ENCODE measurements at regions of chr4 and their contacts with region 1.

Region 1: DNA sequence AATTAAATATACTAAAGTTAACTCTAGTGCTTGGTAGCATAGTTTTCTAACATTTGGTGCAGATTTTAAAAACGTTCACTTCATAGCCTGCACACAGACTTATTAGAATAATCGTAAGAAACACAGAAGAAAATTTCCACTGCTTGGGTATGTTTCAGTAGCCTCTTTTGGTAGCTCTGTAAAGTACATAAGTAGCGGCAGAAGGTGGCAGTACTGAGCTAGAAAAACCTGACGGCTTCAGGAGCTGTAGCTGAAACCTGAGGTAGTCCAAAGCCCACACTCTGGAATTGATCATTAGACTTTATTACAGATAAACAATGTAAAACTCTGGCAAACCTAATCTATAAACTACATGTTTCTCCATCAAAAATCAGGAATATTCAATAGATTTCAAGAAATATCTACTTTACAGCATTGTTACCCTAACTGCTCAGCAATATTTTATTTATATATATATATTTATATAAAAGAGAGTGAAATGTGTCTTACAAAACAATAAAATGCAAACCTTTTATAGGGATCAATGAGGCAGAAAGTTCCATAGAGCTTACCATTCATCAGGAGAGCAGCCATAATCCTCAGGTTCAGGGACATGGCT is 88.2 kb downstream of the ATP8A1 start:
- DNase-seq: peak; percentile 80
- ATAC-seq: peak; percentile 90
- H3K4me3 ChIP-seq: no peak overlapping the region
- H3K4me3 Mint-ChIP-seq: no peak overlapping the region
- H3K27ac ChIP-seq: peak overlapping the region in 1 of 2 donors; percentile 17
- H3K27ac Mint-ChIP-seq: no peak overlapping the region
- H3K4me1 ChIP-seq: no peaks in the 10 kb centered on the region
- H3K4me1 Mint-ChIP-seq: no peaks in the 10 kb centered on the region
- H3K27me3 ChIP-seq: no peaks in the 10 kb centered on the region
- H3K27me3 Mint-ChIP-seq: no peaks in the 10 kb centered on the region
- CTCF ChIP-seq: peak; percentile 90

Region 2: GRCh38 chr4:42554072-42554471 is 14.6 kb before region 1 on chr4:
- CTCF ChIA-PET with region 1: interaction called, 10 read pairs
- POLR2A ChIA-PET with region 1: no interaction called
- intact Hi-C with region 1: no loop called
- DNase-seq: no peak
- ATAC-seq: no peak
- H3K4me3 ChIP-seq: no peak overlapping the region
- H3K4me3 Mint-ChIP-seq: no peak overlapping the region
- H3K27ac ChIP-seq: no peak overlapping the region
- H3K27ac Mint-ChIP-seq: no peak overlapping the region
- H3K4me1 ChIP-seq: no peaks in the 10 kb centered on the region
- H3K4me1 Mint-ChIP-seq: no peaks in the 10 kb centered on the region
- H3K27me3 ChIP-seq: no peaks in the 10 kb centered on the region
- H3K27me3 Mint-ChIP-seq: no peaks in the 10 kb centered on the region
- CTCF ChIP-seq: no peak

Region 3: DNA sequence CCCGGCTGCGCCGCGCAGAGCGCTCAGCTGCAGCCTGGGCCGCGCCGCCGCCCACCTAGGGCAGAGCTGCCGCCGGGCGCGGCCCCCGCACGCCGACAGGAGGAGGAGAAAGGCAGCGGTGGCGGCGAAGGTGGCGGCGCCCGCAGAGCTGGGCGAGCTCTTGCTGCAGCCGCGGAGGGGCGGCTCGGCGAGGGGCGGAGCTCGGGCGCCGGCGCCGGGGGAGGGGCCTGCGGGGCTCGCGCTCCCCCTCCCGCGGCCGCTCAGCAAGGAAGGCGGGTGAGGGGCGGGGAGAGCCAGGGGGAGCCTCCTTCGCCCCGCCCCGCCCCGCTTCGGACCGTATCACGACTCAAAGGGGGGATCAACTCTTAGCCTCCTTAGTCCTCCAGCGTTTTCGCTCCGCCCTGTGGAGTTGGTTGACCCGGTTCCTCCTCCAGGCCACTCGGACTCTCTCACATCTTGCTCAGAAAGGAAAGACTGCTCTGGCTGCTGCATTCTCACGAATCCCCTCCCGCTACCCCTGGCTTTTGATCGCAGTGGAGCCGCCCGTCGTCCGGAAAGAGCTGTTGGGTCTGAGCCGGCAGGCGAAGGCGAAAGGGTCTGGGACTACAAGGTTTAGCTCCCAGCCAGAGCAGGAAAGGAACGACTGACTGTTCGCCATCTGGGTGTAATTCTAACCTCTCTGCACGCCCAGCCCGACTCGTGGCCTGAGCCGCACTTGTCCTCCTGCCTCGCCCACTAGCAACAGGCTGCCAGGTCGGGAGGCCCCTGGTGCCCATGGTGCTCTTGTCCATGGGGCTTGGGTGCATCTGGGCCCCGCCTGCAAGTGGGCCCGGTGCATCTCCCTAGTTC is 88.5 kb after region 1 on chr4 and contains the start of gene ATP8A1:
- CTCF ChIA-PET with region 1: interaction called, 17 read pairs
- POLR2A ChIA-PET with region 1: interaction called, 3 read pairs
- intact Hi-C with region 1: loop called (anchors 2 kb)
- DNase-seq: peak; percentile 96
- ATAC-seq: peak; percentile 92
- H3K4me3 ChIP-seq: peak within 1 kb of the TSS; percentile 85 to 99 (median 94)
- H3K4me3 Mint-ChIP-seq: peak within 1 kb of the TSS; percentile 99
- H3K27ac ChIP-seq: peak within 1 kb of the TSS; percentile 90 to 92
- H3K27ac Mint-ChIP-seq: peak within 1 kb of the TSS; percentile 100
- H3K4me1 ChIP-seq: peaks cover 21 to 26% of the 10 kb centered on the region in 2 donors
- H3K4me1 Mint-ChIP-seq: peaks cover 45% of the 10 kb centered on the region
- H3K27me3 ChIP-seq: no peaks in the 10 kb centered on the region
- H3K27me3 Mint-ChIP-seq: no peaks in the 10 kb centered on the region
- CTCF ChIP-seq: no peak
- total RNA-seq, gene ATP8A1: 51.8 and 54.3 TPM in 2 replicates

Region 4: DNA sequence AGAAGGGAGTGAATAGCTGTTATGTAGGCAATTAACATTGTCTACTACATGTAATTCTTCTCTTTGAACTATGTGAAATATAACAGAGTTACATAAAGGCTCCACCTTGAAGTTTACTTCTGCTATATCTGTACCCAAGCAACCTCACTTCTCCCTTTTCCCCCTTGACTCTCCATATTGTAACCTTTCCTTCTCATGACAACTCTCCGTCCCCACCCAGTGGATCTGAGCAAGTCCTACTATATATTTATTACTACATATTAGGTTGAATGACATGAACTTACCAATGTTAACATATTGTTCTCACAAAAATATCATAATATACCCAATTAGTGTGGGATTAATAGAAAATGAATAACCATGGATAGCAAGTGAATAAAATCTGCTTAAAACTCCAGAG is 181.4 kb after region 1 on chr4:
- CTCF ChIA-PET with region 1: interaction called, 55 read pairs
- POLR2A ChIA-PET with region 1: no interaction called
- intact Hi-C with region 1: loop called (anchors 1 kb)
- DNase-seq: peak; percentile 60
- ATAC-seq: peak; percentile 67
- H3K4me3 ChIP-seq: no peak overlapping the region
- H3K4me3 Mint-ChIP-seq: no peak overlapping the region
- H3K27ac ChIP-seq: no peak overlapping the region
- H3K27ac Mint-ChIP-seq: no peak overlapping the region
- H3K4me1 ChIP-seq: no peaks in the 10 kb centered on the region
- H3K4me1 Mint-ChIP-seq: no peaks in the 10 kb centered on the region
- H3K27me3 ChIP-seq: no peaks in the 10 kb centered on the region
- H3K27me3 Mint-ChIP-seq: no peaks in the 10 kb centered on the region
- CTCF ChIP-seq: peak; percentile 47

Region 5: GRCh38 chr4:42816189-42816879 is 247.6 kb after region 1 on chr4:
- CTCF ChIA-PET with region 1: interaction called, 39 read pairs
- POLR2A ChIA-PET with region 1: no interaction called
- intact Hi-C with region 1: loop called (anchors 1 kb)
- DNase-seq: peak; percentile 6
- ATAC-seq: no peak
- H3K4me3 ChIP-seq: no peak overlapping the region
- H3K4me3 Mint-ChIP-seq: no peak overlapping the region
- H3K27ac ChIP-seq: no peak overlapping the region
- H3K27ac Mint-ChIP-seq: peak overlapping the region; percentile 39
- H3K4me1 ChIP-seq: peaks cover 11 to 17% of the 10 kb centered on the region in 2 donors
- H3K4me1 Mint-ChIP-seq: peaks cover 15% of the 10 kb centered on the region
- H3K27me3 ChIP-seq: peaks cover 0 to 8% (median 0%) of the 10 kb centered on the region in 4 experiments
- H3K27me3 Mint-ChIP-seq: peaks cover 5% of the 10 kb centered on the region
- CTCF ChIP-seq: no peak

Region 6: GRCh38 chr4:42895452-42895851 is 326.7 kb after region 1 on chr4:
- CTCF ChIA-PET with region 1: no interaction called
- POLR2A ChIA-PET with region 1: no interaction called
- intact Hi-C with region 1: no loop called
- DNase-seq: no peak
- ATAC-seq: no peak
- H3K4me3 ChIP-seq: no peak overlapping the region
- H3K4me3 Mint-ChIP-seq: no peak overlapping the region
- H3K27ac ChIP-seq: no peak overlapping the region
- H3K27ac Mint-ChIP-seq: no peak overlapping the region
- H3K4me1 ChIP-seq: no peaks in the 10 kb centered on the region
- H3K4me1 Mint-ChIP-seq: no peaks in the 10 kb centered on the region
- H3K27me3 ChIP-seq: peaks cover 0 to 8% (median 1%) of the 10 kb centered on the region in 4 experiments
- H3K27me3 Mint-ChIP-seq: peaks cover 15% of the 10 kb centered on the region
- CTCF ChIP-seq: no peak

Measured in B cell (primary cell).